ENCODE measurements at regions of chr3 and their contacts with region 1.

Region 1: GRCh38 chr3:183895296-183895695 is 10.6 kb upstream of the PARL start:
- DNase-seq: peak; percentile 74
- H3K4me3 ChIP-seq: no peak overlapping the region
- H3K27ac ChIP-seq: no peak overlapping the region
- H3K4me1 ChIP-seq: no peaks in the 10 kb centered on the region
- H3K27me3 ChIP-seq: no peaks in the 10 kb centered on the region

Region 2: DNA sequence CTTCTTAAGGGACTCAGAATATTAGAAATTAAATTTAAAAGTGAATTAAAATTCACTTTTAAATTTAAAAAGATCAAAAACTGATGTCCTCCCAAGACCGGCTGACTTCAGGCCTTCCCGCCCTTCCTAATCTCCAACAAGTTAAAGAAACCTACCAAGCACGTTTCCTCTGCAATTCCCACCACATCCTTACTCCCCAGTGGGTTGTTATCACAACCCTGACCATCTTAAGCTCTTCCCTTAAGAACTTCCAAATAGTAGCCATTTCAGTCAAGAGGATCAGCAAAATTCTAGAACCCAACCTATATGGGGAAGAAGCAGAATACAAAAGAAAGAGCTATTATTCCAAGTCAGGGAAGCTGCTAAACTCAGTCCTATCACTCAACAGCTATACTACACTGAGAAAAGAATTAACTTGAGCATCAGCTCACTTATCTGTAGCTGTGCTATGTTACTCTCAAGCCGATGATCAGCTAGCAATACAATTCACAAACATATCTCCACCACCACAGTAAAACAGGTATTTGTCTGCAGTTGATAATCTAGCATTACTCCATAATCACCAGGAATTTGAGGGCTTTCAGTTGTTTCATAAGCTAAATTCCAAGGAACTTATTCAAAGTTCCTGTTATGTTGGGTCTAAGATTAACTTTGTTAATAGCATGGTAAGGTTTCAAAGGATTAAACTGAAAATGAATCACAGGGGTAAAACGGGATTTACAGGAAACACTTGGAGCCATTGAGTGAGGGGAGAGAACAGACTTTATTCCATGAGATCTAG is 108.1 kb after region 1 on chr3:
- in situ Hi-C with region 1: no loop called
- DNase-seq: peak; percentile 75
- H3K4me3 ChIP-seq: peak overlapping the region; percentile 40
- H3K27ac ChIP-seq: peak overlapping the region; percentile 77
- H3K4me1 ChIP-seq: peaks cover 24% of the 10 kb centered on the region
- H3K27me3 ChIP-seq: no peaks in the 10 kb centered on the region

Region 3: GRCh38 chr3:184066211-184066610 is 170.9 kb after region 1 on chr3:
- in situ Hi-C with region 1: no loop called
- DNase-seq: peak; percentile 57
- H3K4me3 ChIP-seq: no peak overlapping the region
- H3K27ac ChIP-seq: no peak overlapping the region
- H3K4me1 ChIP-seq: peaks cover 13% of the 10 kb centered on the region
- H3K27me3 ChIP-seq: no peaks in the 10 kb centered on the region

Region 4: GRCh38 chr3:184250167-184250828 is 355.0 kb after region 1 on chr3:
- in situ Hi-C with region 1: loop called (anchors 10 kb)
- DNase-seq: peak; percentile 86
- H3K4me3 ChIP-seq: peak overlapping the region; percentile 97
- H3K27ac ChIP-seq: peak overlapping the region; percentile 10; the same call in 1 of the 2 replicates
- H3K4me1 ChIP-seq: no peaks in the 10 kb centered on the region
- H3K27me3 ChIP-seq: no peaks in the 10 kb centered on the region

Region 5: DNA sequence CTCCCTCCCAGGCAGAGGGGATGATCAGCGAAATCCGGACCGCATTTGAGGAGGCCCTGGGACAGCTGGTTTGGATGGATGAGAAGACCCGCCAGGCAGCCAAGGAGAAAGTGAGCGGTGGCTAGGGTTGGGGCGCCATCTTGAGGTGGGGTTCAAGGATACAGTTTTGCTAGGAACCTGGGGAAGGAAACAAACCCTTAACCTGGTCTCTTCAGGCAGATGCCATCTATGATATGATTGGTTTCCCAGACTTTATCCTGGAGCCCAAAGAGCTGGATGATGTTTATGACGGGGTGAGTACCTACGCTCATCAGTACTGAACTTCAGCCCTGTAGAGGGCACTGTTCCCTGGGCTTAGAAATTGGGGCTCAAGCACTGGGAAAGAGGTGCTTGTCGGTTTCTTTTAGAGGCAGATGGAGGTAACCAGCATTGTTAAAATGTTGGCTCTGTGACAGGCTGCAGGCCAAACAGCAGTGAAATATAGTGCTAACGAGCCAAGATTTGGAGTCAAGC is 394.2 kb after region 1 on chr3:
- in situ Hi-C with region 1: loop called (anchors 10 kb)
- DNase-seq: peak; percentile 65
- H3K4me3 ChIP-seq: no peak overlapping the region
- H3K27ac ChIP-seq: no peak overlapping the region
- H3K4me1 ChIP-seq: no peaks in the 10 kb centered on the region
- H3K27me3 ChIP-seq: no peaks in the 10 kb centered on the region

Measured in GM23248 (cell line).